OCI-LY7 (cell line): ENCODE measurements at regions of chr2 and their contacts with region 1.

Region 1: GRCh38 chr2:40554668-40555285 is 102.9 kb upstream of the SLC8A1 start:
- DNase-seq: peak; percentile 72
- H3K4me3 ChIP-seq: no peak overlapping the region
- H3K27ac ChIP-seq: no peak overlapping the region
- H3K4me1 ChIP-seq: no peaks in the 10 kb centered on the region
- CTCF ChIP-seq: peak; percentile 98

Region 2: DNA sequence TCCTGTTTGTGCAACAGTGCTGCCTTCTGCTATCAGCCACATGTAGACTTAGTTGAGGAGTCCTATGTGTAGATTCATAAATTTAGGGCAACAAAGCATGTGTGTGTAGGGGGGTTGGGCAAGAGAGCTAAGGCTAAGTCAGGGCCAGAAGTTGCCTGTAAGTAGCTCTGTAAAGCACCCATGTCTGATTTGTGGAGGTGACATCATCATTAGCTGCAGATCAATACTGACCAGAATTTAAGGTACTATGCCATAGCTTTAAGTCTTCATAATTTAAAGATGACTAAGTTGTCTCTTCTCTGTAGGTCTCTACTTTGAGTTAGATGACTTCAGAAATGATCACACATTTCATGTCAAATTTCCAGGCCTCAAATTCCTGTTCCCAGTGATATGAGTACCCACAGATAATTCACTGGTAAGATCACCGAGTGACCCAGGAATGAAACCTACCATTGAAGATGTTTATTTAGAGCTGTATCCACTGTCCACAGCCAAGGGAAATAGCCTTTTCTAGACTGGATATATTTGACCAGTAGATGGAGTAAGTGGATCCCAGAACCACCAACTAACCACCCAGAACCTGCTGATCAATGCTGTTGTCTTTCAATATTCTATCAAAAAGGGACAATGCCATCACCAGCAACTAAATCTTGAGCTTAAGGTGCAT is 341.8 kb before region 1 on chr2:
- CTCF ChIA-PET with region 1: interaction called, 3 read pairs
- POLR2A ChIA-PET with region 1: no interaction called
- intact Hi-C with region 1: loop called (anchors 10 kb)
- DNase-seq: no peak
- H3K4me3 ChIP-seq: no peak overlapping the region
- H3K27ac ChIP-seq: no peak overlapping the region
- H3K4me1 ChIP-seq: peaks cover 8% of the 10 kb centered on the region
- CTCF ChIP-seq: peak; percentile 72

Region 3: DNA sequence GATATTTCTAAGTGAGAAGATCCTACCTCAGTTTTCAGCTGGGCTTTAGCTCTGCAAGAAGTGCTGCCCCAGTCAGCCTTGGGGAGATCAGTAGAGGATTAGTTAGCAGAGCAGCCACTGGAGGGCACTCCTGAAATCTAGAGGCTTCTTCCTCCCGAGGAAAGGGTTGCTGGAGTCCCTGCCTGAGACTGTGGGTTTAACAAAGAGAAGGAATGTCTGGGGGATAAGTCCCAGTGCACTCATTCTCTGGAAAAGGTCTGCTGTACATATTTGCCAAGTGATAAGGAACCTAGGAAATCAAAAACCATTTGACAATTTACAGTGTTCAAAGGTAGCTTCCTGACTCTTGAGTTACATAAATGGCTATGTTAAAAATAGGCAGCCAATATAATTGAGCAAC is 310.1 kb before region 1 on chr2:
- CTCF ChIA-PET with region 1: no interaction called
- POLR2A ChIA-PET with region 1: interaction called, 3 read pairs
- intact Hi-C with region 1: loop called (anchors 2 kb)
- DNase-seq: peak; percentile 75
- H3K4me3 ChIP-seq: no peak overlapping the region
- H3K27ac ChIP-seq: no peak overlapping the region
- H3K4me1 ChIP-seq: peaks cover 30% of the 10 kb centered on the region
- CTCF ChIP-seq: peak; percentile 88

Region 4: DNA sequence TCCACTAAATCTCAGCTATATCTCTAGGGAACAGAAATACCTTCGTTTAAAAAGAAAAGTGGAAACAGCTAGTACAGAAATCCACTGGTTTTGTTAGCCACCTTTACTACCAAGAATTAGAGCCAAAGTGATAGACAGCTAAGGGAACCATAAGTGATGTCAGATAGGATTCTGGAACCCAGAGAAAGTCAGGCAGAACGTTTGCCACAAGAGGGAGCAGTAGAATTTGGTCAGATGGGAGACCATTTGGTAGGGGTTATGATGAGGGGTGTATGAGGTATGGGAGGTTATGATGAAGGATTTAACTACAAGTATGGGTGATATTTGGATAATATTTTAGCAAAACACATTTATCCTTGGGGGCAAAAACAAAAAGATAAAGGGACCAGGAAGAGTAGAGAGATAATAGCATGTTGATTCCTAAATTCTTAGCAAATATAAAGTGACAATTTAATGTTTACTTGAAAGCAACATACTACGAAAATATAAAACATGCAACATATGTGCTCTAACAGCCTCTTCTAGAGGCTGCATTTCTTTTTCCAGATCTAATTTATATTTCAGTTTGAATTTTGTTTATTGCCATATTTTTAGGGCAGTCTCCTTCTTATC is 106.2 kb before region 1 on chr2:
- CTCF ChIA-PET with region 1: no interaction called
- POLR2A ChIA-PET with region 1: interaction called, 3 read pairs
- intact Hi-C with region 1: loop called (anchors 5 kb)
- DNase-seq: peak; percentile 68
- H3K4me3 ChIP-seq: no peak overlapping the region
- H3K27ac ChIP-seq: no peak overlapping the region
- H3K4me1 ChIP-seq: peaks cover 45% of the 10 kb centered on the region
- CTCF ChIP-seq: peak; percentile 88